ENCODE measurements at regions of chr17 and their contacts with region 1.

Region 1: GRCh38 chr17:7329374-7329996 is 350 bp upstream of the NEURL4 start:
- DNase-seq: peak; percentile 97 to 99
- ATAC-seq: peak; percentile 87 to 88
- H3K4me3 ChIP-seq: peak overlapping the region; percentile 78 to 99 (median 93)
- H3K27ac ChIP-seq: peak overlapping the region; percentile 94 to 99 (median 96)
- H3K4me1 ChIP-seq: peaks cover 15 to 24% of the 10 kb centered on the region in 2 donors
- H3K27me3 ChIP-seq: peaks cover 0 to 3% (median 2%) of the 10 kb centered on the region in 3 donors
- CTCF ChIP-seq: no peak
- POLR2A ChIP-seq: peak; percentile 87 to 92

Region 2: DNA sequence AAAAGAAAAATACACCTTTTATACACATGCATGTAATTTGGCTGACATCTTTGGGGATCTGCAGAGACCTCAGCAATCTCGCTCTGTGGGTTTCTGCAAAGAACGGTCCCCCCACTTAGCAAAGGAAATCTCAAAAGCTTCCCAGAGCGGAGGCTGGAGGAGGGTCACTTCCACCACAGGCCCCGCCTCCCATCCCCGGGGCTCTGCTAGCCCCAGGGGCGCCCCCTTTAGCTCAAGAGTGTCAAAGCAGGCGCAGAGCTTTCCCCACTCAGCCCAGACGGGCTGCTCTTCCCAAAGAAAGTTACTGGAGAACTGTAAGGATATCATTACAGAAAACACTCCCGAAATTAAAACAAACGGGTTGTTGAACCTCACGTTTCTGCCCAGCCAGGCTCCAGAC is 627.8 kb before region 1 on chr17:
- in situ Hi-C with region 1: no loop called
- intact Hi-C with region 1: no loop called
- DNase-seq: no peak
- ATAC-seq: no peak
- H3K4me3 ChIP-seq: no peak overlapping the region
- H3K27ac ChIP-seq: no peak overlapping the region
- H3K4me1 ChIP-seq: no peaks in the 10 kb centered on the region
- H3K27me3 ChIP-seq: no peaks in the 10 kb centered on the region
- CTCF ChIP-seq: peak in 1 of 5 experiments; percentile 14
- POLR2A ChIP-seq: no peak

Region 3: DNA sequence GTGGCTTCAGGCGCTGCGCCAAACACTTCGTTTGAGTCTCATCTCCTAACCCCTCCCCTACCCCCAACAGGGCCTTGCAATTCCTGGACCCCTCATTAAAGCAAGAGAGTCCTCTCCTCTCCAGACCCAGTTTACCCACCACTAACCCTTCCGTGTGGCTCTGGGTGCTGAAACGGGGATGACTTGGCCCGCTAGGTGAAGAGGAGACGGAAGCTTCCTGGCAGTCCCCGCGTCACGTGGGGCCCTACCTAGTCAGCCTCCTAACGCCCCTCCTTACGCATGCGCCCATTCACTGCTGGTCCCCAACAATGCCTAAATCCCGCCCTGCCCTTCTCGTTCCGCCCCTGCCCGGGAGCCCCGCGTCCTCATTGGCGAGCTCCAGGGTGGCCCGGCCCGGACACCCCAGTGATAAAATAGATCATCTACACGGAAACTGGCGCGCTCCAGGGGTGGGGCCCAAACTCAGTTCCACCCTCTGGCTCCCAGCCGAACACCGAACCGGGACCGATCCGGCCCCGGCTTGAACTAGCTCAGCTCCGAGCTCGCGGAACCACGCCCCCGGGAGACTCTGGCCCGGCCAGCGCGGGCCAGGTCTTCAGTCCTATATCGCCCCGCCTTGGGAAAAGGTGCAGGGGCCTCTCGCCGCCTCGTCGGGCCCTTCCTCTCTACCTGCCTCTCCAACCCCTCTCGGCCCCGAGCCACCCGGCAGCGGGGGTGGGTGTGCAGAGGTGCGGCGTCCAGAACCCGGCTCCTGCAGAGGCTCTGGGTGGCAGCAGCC is 293.7 kb before region 1 on chr17 and contains the start of gene SLC16A13:
- in situ Hi-C with region 1: loop called in 1 of 4 experiments (anchors 25 kb)
- intact Hi-C with region 1: no loop called
- DNase-seq: peak; percentile 78 to 81
- ATAC-seq: peak; percentile 77 to 88
- H3K4me3 ChIP-seq: peak within 1 kb of the TSS; percentile 49 to 74 (median 58)
- H3K27ac ChIP-seq: peak within 1 kb of the TSS; percentile 64 to 80 (median 74)
- H3K4me1 ChIP-seq: peaks cover 5 to 6% of the 10 kb centered on the region in 2 donors
- H3K27me3 ChIP-seq: peaks cover 7 to 17% (median 16%) of the 10 kb centered on the region in 3 donors
- CTCF ChIP-seq: no peak
- POLR2A ChIP-seq: peak; percentile 38 to 70
- total RNA-seq, gene SLC16A13: 0.36 to 0.49 TPM in 2 of 4 donors, not detected in the others

Region 4: GRCh38 chr17:7314719-7315569 is 14.5 kb before region 1 on chr17 and contains the start of gene GPS2:
- in situ Hi-C with region 1: no loop called
- intact Hi-C with region 1: no loop called
- DNase-seq: peak; percentile 86 to 90
- ATAC-seq: peak; percentile 83 to 87
- H3K4me3 ChIP-seq: peak within 1 kb of the TSS; percentile 86 to 98 (median 92)
- H3K27ac ChIP-seq: peak within 1 kb of the TSS; percentile 92 to 97 (median 93)
- H3K4me1 ChIP-seq: peaks cover 46 to 48% of the 10 kb centered on the region in 2 donors
- H3K27me3 ChIP-seq: no peaks in the 10 kb centered on the region
- CTCF ChIP-seq: peak in 1 of 5 experiments; percentile 16
- POLR2A ChIP-seq: peak; percentile 83 to 89
- total RNA-seq, gene GPS2: 135 to 240 (median 169) TPM

Measured in gastrocnemius medialis (tissue), 4 donors.